Testis (tissue), 5 donors: ENCODE measurements at regions of chr6 and their contacts with region 1.

Region 1: DNA sequence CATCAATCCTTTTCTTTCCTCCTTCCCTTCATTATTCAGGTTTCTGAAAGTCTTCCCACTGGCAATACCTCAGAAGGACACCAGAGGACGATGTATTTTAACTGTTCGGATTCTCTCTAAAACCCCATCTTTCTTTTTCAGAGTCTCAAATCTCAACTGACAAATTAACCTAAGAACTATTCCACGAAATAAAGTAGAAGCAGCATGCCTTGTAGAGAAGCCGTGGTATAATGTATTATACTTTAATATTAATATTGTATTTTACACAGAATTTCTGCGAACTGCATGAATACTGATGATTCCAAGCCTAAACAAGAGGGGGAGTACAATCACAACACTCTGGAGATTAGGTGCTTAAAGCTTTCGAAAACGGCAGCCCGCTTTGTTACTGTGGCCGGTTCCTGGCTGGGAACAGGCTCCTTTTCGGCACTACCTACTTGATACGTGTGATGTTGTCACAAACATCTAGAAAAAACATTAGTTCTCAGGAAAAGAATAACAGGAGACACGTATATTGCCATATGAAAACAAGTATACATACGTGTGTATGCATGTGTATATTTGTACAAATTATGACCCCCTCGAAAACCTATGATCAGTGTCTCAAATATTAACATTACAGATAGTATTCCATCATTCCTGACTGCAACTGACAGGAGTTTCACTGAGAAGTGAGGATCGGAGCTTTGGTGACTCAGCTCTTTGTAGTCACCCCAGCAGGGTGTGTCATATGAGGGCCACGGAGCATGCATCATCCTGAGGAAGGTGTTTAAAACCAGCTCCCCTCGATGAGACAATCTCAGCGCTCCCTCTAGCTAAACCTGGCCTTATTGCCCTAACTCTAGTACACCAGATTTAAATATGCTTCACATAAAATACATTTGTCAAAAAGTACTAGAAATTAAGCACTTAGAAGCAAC is 319.7 kb upstream of the TCF21 start:
- DNase-seq: peak; percentile 42
- H3K4me3 ChIP-seq: peak overlapping the region; percentile 6 to 46
- H3K27ac ChIP-seq: peak overlapping the region in 1 of 2 donors; percentile 42
- H3K4me1 ChIP-seq: no peaks in the 10 kb centered on the region
- H3K27me3 ChIP-seq: no peaks in the 10 kb centered on the region
- CTCF ChIP-seq: peak; percentile 91 to 97 (median 94)
- POLR2A ChIP-seq: no peak

Region 2: GRCh38 chr6:133916650-133917151 is 347.5 kb after region 1 on chr6:
- intact Hi-C with region 1: loop called (anchors 5 kb)
- DNase-seq: peak; percentile 98
- H3K4me3 ChIP-seq: no peak overlapping the region
- H3K27ac ChIP-seq: no peak overlapping the region
- H3K4me1 ChIP-seq: no peaks in the 10 kb centered on the region
- H3K27me3 ChIP-seq: no peaks in the 10 kb centered on the region
- CTCF ChIP-seq: peak; percentile 74 to 88 (median 86)
- POLR2A ChIP-seq: no peak